ENCODE measurements at regions of chr16 and their contacts with region 1.

Region 1: GRCh38 chr16:69930117-69930776 is 20.9 kb upstream of the CLEC18A start:
- DNase-seq: peak; percentile 20 to 79
- H3K4me3 ChIP-seq: no peak overlapping the region
- H3K4me1 ChIP-seq: no peaks in the 10 kb centered on the region
- H3K27me3 ChIP-seq: no peaks in the 10 kb centered on the region

Region 2: DNA sequence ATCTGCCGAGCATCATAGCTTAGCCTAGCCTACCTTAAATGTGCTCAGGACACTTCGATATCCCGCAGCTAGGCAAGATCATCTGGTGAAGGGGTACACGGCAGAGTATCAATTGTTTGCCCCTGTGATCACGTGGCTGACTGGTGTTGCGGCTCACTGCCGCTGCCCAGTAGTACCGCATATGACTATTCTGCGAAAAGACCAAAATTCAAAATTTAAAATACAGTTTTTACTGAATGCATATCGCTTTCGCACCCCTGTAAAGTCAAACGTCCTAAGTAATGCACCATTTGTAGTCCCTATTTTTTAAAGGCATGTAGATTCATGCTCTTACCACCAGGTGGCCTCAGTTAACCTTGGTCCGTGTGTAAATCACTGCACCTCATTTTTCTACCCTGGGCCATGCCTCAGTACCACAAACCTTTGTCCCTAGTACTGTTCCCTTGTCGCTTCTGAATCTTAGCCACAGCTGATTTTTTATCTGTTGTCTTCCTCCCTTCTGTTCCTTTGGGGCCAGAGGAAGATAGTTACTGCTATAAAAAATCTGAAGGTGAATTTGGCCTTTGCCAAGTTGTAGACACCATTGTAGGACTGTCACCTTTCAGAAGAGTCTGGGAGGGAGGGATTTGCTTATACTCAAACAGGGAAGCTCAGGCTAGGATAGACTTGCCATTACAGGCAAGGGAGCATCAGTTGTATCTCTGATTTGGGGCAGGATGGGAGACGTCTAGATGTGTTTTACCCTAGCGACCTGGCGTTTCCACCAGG is 133.7 kb before region 1 on chr16:
- in situ Hi-C with region 1: loop called (anchors 25 kb)
- DNase-seq: peak; percentile 57 to 71
- H3K4me3 ChIP-seq: no peak overlapping the region
- H3K4me1 ChIP-seq: no peaks in the 10 kb centered on the region
- H3K27me3 ChIP-seq: no peaks in the 10 kb centered on the region

Region 3: GRCh38 chr16:69833357-69834282 is 96.6 kb before region 1 on chr16:
- in situ Hi-C with region 1: no loop called
- DNase-seq: peak; percentile 22 to 54
- H3K4me3 ChIP-seq: no peak overlapping the region
- H3K4me1 ChIP-seq: no peaks in the 10 kb centered on the region
- H3K27me3 ChIP-seq: no peaks in the 10 kb centered on the region

Region 4: GRCh38 chr16:70342016-70342415 is 411.8 kb after region 1 on chr16:
- in situ Hi-C with region 1: no loop called
- DNase-seq: no peak
- H3K4me3 ChIP-seq: no peak overlapping the region
- H3K4me1 ChIP-seq: peaks cover 7% of the 10 kb centered on the region
- H3K27me3 ChIP-seq: no peaks in the 10 kb centered on the region

Measured in HAP-1 (cell line).